Naive thymus-derived CD4-positive, alpha-beta T cell (primary cell): ENCODE measurements at regions of chr1 and their contacts with region 1.

Region 1: GRCh38 chr1:244047621-244048471 is 3.2 kb upstream of the ZBTB18 start:
- DNase-seq: peak; percentile 85 to 98 (median 97)
- ATAC-seq: peak; percentile 87
- H3K4me3 ChIP-seq: peak overlapping the region; percentile 61
- H3K4me3 Mint-ChIP-seq: peak overlapping the region; percentile 86 to 96 (median 96)
- H3K27ac ChIP-seq: peak overlapping the region; percentile 96
- H3K27ac Mint-ChIP-seq: peak overlapping the region; percentile 97 to 100 (median 98)
- H3K4me1 ChIP-seq: peaks cover 6 to 23% of the 10 kb centered on the region in 2 donors
- H3K4me1 Mint-ChIP-seq: peaks cover 13 to 39% (median 33%) of the 10 kb centered on the region in 7 donors
- H3K27me3 ChIP-seq: no peaks in the 10 kb centered on the region
- H3K27me3 Mint-ChIP-seq: peaks cover 0 to 43% (median 0%) of the 10 kb centered on the region in 5 donors

Region 2: GRCh38 chr1:243850452-243851256 is 197.2 kb before region 1 on chr1:
- CTCF ChIA-PET with region 1: interaction called, 3 read pairs
- POLR2A ChIA-PET with region 1: interaction called, 20 read pairs
- intact Hi-C with region 1: loop called (anchors 1 kb)
- DNase-seq: peak; percentile 79 to 88 (median 84)
- ATAC-seq: peak; percentile 64
- H3K4me3 ChIP-seq: peak overlapping the region; percentile 75
- H3K4me3 Mint-ChIP-seq: peak overlapping the region; percentile 90 to 97 (median 93)
- H3K27ac ChIP-seq: peak overlapping the region; percentile 97
- H3K27ac Mint-ChIP-seq: peak overlapping the region; percentile 88 to 99 (median 93)
- H3K4me1 ChIP-seq: peaks cover 4 to 5% of the 10 kb centered on the region in 2 donors
- H3K4me1 Mint-ChIP-seq: peaks cover 8 to 47% (median 30%) of the 10 kb centered on the region in 7 donors
- H3K27me3 ChIP-seq: no peaks in the 10 kb centered on the region
- H3K27me3 Mint-ChIP-seq: peaks cover 0 to 59% (median 0%) of the 10 kb centered on the region in 5 donors

Region 3: DNA sequence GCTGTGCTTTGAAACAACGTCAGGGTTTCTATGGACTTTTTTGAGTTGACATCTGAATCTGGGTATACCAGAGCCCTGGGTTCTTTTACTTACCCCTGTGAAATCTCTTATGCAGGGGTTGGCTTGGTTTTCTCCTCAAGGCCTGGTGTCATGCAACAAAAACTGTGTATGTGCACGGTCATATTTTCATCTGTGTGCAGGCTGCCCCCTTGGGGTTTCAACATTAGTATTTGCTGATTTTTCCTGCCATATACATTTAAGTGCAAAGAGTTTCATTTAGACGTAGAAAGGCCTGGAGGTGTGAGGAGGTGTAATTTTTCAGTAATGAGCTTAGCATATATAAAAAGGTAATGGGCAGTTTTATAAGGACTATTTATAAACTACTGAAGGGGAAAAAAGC is 18.7 kb before region 1 on chr1:
- CTCF ChIA-PET with region 1: no interaction called
- POLR2A ChIA-PET with region 1: interaction called, 3 read pairs
- intact Hi-C with region 1: loop called in 1 of 2 experiments (anchors 2 kb)
- DNase-seq: no peak
- ATAC-seq: no peak
- H3K4me3 ChIP-seq: no peak overlapping the region
- H3K4me3 Mint-ChIP-seq: no peak overlapping the region
- H3K27ac ChIP-seq: no peak overlapping the region
- H3K27ac Mint-ChIP-seq: no peak overlapping the region
- H3K4me1 ChIP-seq: no peaks in the 10 kb centered on the region
- H3K4me1 Mint-ChIP-seq: no peaks in the 10 kb centered on the region
- H3K27me3 ChIP-seq: no peaks in the 10 kb centered on the region
- H3K27me3 Mint-ChIP-seq: peaks cover 0 to 15% (median 5%) of the 10 kb centered on the region in 5 donors

Region 4: DNA sequence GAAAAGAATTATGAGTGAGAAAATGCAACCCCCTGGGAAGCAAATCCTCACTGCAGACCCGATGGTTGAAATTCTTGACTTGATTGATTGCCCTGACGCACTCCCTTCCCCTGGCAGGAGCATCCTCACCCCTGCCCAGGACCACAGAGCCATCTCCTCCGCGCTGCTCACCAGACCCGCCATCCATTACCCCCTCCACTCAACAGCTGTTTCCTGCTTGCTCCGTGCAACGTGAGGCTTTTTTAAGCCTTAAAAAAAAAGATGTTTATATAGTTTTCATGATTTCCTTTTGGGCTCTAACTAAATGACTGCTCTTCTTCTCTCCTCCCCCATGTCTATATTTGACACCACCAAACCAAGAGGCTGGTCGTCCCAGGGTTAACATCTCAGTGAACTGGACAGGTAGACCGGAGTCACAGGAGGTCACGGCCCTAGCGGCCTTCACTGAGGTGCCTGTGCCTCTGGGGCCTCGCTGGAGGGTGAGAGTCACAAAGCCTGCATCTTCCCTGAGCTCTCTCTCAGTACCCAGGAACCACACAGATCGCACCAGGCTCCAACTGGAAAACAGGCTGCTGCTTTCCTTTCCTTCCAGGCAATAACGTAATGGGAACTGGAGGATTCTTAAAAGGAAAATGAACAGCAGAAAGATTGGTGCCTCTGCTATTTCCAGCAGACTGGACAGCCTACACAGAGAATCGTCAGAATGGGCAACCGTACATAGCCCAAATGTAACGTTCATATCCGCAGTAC is 53.0 kb after region 1 on chr1:
- CTCF ChIA-PET with region 1: interaction called, 3 read pairs
- POLR2A ChIA-PET with region 1: interaction called, 10 read pairs
- intact Hi-C with region 1: loop called in 1 of 2 experiments (anchors 1 kb)
- DNase-seq: peak in 5 of 9 donors; percentile 6 to 27 (median 23)
- ATAC-seq: peak; percentile 41
- H3K4me3 ChIP-seq: no peak overlapping the region
- H3K4me3 Mint-ChIP-seq: peak overlapping the region in 9 of 10 donors; percentile 21 to 81 (median 70)
- H3K27ac ChIP-seq: no peak overlapping the region
- H3K27ac Mint-ChIP-seq: peak overlapping the region in 7 of 9 donors; percentile 7 to 81 (median 44)
- H3K4me1 ChIP-seq: peaks cover 0 to 16% of the 10 kb centered on the region in 2 donors
- H3K4me1 Mint-ChIP-seq: peaks cover 8 to 27% (median 22%) of the 10 kb centered on the region in 7 donors
- H3K27me3 ChIP-seq: no peaks in the 10 kb centered on the region
- H3K27me3 Mint-ChIP-seq: peaks cover 0 to 22% (median 11%) of the 10 kb centered on the region in 5 donors

Region 5: DNA sequence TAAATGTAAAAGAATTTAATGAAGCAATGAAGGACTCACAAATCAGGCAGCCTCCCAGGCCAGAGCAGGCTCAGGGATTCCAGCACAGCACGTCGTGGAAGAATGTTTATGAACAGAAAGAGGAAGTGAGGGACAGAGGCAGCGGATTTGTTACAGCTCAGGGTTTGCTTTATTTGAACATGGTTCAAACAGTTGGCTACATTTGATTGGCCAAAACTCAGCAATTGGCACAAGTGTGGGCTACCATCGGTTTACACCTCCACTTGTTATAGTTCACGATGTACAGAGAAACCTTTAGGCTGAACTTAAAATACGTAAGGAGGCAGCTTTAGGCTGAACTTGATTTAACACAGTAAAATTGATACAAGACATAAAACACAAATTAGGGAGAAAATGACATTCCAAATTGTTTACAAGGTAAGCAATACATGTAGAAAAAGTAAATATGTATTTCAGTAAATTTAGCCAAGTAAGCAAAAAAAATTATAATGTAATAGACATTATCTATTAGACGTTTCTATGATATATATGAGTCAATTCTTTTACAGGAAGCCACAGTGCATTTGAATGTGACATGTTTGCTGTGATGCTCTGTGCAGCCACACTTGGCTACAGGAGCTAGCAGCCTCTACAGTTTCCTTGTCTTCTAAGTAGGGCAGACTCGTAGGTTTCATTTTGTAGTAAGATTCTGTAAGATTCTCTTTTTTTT is 277.4 kb after region 1 on chr1:
- CTCF ChIA-PET with region 1: no interaction called
- POLR2A ChIA-PET with region 1: no interaction called
- intact Hi-C with region 1: loop called in 1 of 2 experiments (anchors 2 kb)
- DNase-seq: peak in 2 of 9 donors; percentile 5 to 11
- ATAC-seq: peak; percentile 76
- H3K4me3 ChIP-seq: no peak overlapping the region
- H3K4me3 Mint-ChIP-seq: peak overlapping the region in 6 of 10 donors; percentile 4 to 82 (median 70)
- H3K27ac ChIP-seq: no peak overlapping the region
- H3K27ac Mint-ChIP-seq: peak overlapping the region in 6 of 9 donors; percentile 4 to 92 (median 37)
- H3K4me1 ChIP-seq: peaks cover 0 to 28% of the 10 kb centered on the region in 2 donors
- H3K4me1 Mint-ChIP-seq: peaks cover 0 to 51% (median 0%) of the 10 kb centered on the region in 7 donors
- H3K27me3 ChIP-seq: no peaks in the 10 kb centered on the region
- H3K27me3 Mint-ChIP-seq: peaks cover 0 to 6% (median 4%) of the 10 kb centered on the region in 5 donors

Region 6: DNA sequence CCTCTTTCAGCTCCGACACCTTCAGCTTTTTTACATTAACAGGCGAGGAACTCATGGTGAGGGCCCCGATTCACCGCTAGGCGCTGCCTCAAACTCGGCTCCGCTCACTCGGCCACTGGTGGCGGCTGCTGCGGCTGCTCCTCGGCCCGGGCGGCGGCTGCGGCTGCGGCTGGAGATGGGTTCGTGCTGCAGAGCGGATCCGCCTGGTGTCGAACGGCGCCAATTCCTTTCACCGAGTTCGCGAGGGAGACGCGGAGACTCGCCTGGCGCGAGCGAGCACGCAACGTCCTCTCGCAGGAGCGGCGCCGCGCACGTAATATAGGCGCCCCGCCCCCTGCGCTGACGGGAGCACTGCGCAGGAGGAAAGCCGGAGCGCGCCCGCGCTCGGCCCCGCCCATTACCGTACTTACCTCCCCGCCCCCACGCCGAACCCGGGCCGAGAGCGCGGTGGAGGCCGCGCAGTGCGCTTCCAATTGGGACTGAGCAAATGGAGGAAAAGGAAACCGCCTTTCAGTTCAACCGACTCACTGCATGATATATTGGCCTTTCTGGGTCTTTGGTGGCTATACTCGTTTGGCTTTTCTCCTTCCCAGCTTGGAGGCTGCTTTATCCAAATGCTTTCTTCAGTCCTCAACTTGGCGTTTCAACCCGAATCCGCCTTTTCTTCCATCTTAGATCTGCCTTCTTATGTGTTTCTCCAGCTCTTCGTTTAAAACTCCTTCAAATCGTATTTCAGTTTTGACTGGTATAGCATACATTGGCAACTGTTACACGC is 816.6 kb after region 1 on chr1 and contains the start of gene HNRNPU:
- CTCF ChIA-PET with region 1: no interaction called
- POLR2A ChIA-PET with region 1: interaction called, 3 read pairs
- intact Hi-C with region 1: loop called in 1 of 2 experiments (anchors 1 kb)
- DNase-seq: peak; percentile 93 to 99 (median 98)
- ATAC-seq: peak; percentile 81
- H3K4me3 ChIP-seq: peak within 1 kb of the TSS; percentile 78
- H3K4me3 Mint-ChIP-seq: peak within 1 kb of the TSS; percentile 86 to 98 (median 98)
- H3K27ac ChIP-seq: peak within 1 kb of the TSS; percentile 100
- H3K27ac Mint-ChIP-seq: peak within 1 kb of the TSS; percentile 93 to 100 (median 98)
- H3K4me1 ChIP-seq: peaks cover 23 to 25% of the 10 kb centered on the region in 2 donors
- H3K4me1 Mint-ChIP-seq: peaks cover 39 to 56% (median 51%) of the 10 kb centered on the region in 7 donors
- H3K27me3 ChIP-seq: no peaks in the 10 kb centered on the region
- H3K27me3 Mint-ChIP-seq: peaks cover 0 to 3% (median 0%) of the 10 kb centered on the region in 5 donors
- total RNA-seq, gene HNRNPU: 378 to 509 (median 428) TPM